ENCODE measurements at regions of chr2 and their contacts with region 1.

Region 1: DNA sequence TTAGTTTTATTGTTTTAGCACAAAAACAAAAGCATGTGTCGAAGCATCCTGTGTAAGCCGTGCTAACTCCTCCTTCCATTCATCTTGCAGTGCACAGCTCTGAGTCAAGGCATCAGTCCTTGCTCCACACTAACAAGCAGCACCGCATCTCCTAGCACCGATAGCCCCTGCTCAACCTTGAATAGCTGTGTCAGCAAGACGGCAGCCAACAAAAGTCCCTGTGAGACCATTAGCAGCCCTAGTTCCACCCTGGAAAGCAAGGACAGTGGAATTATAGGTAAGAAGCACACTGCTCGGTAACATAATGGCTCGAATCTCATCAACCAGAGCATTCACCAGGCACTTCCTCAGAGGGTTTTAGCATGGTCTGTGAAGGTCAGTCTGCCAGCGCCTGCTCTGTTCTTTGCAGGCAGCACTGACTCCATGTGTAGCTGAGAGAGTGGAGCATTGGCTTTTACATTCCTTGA is 136.2 kb downstream of the WDSUB1 start:
- DNase-seq: peak in 4 of 9 donors; percentile 19 to 40 (median 32)
- ATAC-seq: peak; percentile 52
- H3K4me3 ChIP-seq: no peak overlapping the region
- H3K4me3 Mint-ChIP-seq: no peak overlapping the region
- H3K27ac ChIP-seq: no peak overlapping the region
- H3K27ac Mint-ChIP-seq: no peak overlapping the region
- H3K4me1 ChIP-seq: peaks cover 9 to 32% of the 10 kb centered on the region in 2 donors
- H3K4me1 Mint-ChIP-seq: peaks cover 17 to 44% (median 28%) of the 10 kb centered on the region in 7 donors
- H3K27me3 ChIP-seq: no peaks in the 10 kb centered on the region
- H3K27me3 Mint-ChIP-seq: peaks cover 0 to 5% (median 4%) of the 10 kb centered on the region in 5 donors

Region 2: GRCh38 chr2:159124441-159124911 is 25.8 kb before region 1 on chr2:
- CTCF ChIA-PET with region 1: interaction called, 7 read pairs
- POLR2A ChIA-PET with region 1: interaction called, 6 read pairs
- intact Hi-C with region 1: loop called in 1 of 2 experiments (anchors 2 kb)
- DNase-seq: peak in 1 of 9 donors; percentile 11
- ATAC-seq: peak; percentile 68
- H3K4me3 ChIP-seq: no peak overlapping the region
- H3K4me3 Mint-ChIP-seq: peak overlapping the region in 8 of 10 donors; percentile 3 to 63 (median 36)
- H3K27ac ChIP-seq: no peak overlapping the region
- H3K27ac Mint-ChIP-seq: peak overlapping the region; percentile 43 to 93 (median 79)
- H3K4me1 ChIP-seq: peaks cover 0 to 14% of the 10 kb centered on the region in 2 donors
- H3K4me1 Mint-ChIP-seq: peaks cover 8 to 35% (median 28%) of the 10 kb centered on the region in 7 donors
- H3K27me3 ChIP-seq: no peaks in the 10 kb centered on the region
- H3K27me3 Mint-ChIP-seq: no peaks in the 10 kb centered on the region